CD4-positive, alpha-beta T cell (primary cell): ENCODE measurements at regions of chr13 and their contacts with region 1.

Region 1: DNA sequence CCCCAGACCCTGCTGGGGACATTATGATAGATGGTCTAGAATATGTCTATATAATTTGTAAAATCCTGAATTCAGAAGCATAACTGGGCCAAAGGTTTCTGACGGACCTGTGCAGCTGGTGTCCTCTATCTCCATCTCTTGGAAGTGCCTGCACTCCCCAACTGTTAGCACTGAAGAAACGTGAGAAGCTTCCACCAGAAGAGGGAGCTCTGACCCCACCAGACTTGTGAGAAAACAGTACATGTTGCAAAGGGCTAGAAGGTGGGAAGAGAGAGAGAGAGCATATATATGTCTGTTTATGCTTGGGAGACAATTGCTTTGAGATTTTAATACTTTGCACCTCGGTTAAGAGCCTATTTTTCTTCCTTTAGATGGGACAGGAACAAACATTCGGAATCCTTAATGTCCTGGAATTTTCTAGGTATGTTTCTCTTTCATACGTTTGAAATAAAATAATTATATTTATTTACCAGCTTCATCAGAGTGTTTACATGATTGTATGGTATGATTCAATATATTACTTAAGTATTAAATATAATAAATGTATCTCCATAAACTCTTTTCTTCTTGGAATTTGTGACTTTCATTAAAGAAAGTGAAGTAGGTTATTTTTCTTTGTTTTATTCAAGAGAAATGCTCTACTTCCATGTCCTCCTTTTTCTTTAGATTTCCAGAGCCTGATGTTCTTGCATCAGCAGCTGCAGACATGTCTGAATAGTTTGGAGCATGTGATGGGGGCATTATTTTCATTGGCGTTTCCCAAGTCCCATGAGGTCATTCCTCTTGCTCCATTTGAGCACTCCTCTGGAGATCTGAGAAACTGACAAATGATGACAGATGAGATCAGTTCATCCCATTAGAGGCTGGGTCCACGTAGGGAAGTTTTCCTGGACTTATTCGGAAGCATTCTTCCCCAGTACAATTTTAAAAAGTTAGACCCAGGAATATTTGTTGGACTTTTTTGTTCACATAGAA is 202.9 kb downstream of the ATP8A2 start:
- DNase-seq: peak; percentile 57 to 84 (median 67)
- ATAC-seq: peak; percentile 61
- H3K4me3 ChIP-seq: no peak overlapping the region
- H3K4me3 Mint-ChIP-seq: no peak overlapping the region
- H3K27ac ChIP-seq: no peak overlapping the region
- H3K27ac Mint-ChIP-seq: no peak overlapping the region
- H3K4me1 ChIP-seq: no peaks in the 10 kb centered on the region
- H3K4me1 Mint-ChIP-seq: no peaks in the 10 kb centered on the region
- H3K27me3 ChIP-seq: peaks cover 0 to 3% of the 10 kb centered on the region in 2 experiments
- H3K27me3 Mint-ChIP-seq: peaks cover 68% of the 10 kb centered on the region
- CTCF ChIP-seq: peak; percentile 87

Region 2: GRCh38 chr13:25943658-25944057 is 368.9 kb after region 1 on chr13:
- CTCF ChIA-PET with region 1: no interaction called
- POLR2A ChIA-PET with region 1: no interaction called
- intact Hi-C with region 1: loop called in 1 of 2 experiments (anchors 10 kb)
- DNase-seq: no peak
- ATAC-seq: no peak
- H3K4me3 ChIP-seq: no peak overlapping the region
- H3K4me3 Mint-ChIP-seq: no peak overlapping the region
- H3K27ac ChIP-seq: no peak overlapping the region
- H3K27ac Mint-ChIP-seq: no peak overlapping the region
- H3K4me1 ChIP-seq: no peaks in the 10 kb centered on the region
- H3K4me1 Mint-ChIP-seq: peaks cover 5% of the 10 kb centered on the region
- H3K27me3 ChIP-seq: no peaks in the 10 kb centered on the region
- H3K27me3 Mint-ChIP-seq: no peaks in the 10 kb centered on the region
- CTCF ChIP-seq: no peak

Region 3: GRCh38 chr13:26074706-26075105 is 500.0 kb after region 1 on chr13:
- CTCF ChIA-PET with region 1: interaction called, 5 read pairs
- POLR2A ChIA-PET with region 1: no interaction called
- intact Hi-C with region 1: loop called in 1 of 2 experiments (anchors 1 kb)
- DNase-seq: no peak
- ATAC-seq: no peak
- H3K4me3 ChIP-seq: no peak overlapping the region
- H3K4me3 Mint-ChIP-seq: no peak overlapping the region
- H3K27ac ChIP-seq: no peak overlapping the region
- H3K27ac Mint-ChIP-seq: no peak overlapping the region
- H3K4me1 ChIP-seq: no peaks in the 10 kb centered on the region
- H3K4me1 Mint-ChIP-seq: no peaks in the 10 kb centered on the region
- H3K27me3 ChIP-seq: peaks cover 5 to 9% of the 10 kb centered on the region in 2 experiments
- H3K27me3 Mint-ChIP-seq: peaks cover 67% of the 10 kb centered on the region
- CTCF ChIP-seq: no peak

Region 4: GRCh38 chr13:26698392-26699196 is 1123.9 kb after region 1 on chr13:
- CTCF ChIA-PET with region 1: interaction called, 4 read pairs
- POLR2A ChIA-PET with region 1: no interaction called
- intact Hi-C with region 1: loop called (anchors 2 to 5 kb)
- DNase-seq: peak; percentile 53 to 88 (median 76)
- ATAC-seq: peak; percentile 91
- H3K4me3 ChIP-seq: no peak overlapping the region
- H3K4me3 Mint-ChIP-seq: no peak overlapping the region
- H3K27ac ChIP-seq: no peak overlapping the region
- H3K27ac Mint-ChIP-seq: no peak overlapping the region
- H3K4me1 ChIP-seq: peaks cover 5% of the 10 kb centered on the region
- H3K4me1 Mint-ChIP-seq: no peaks in the 10 kb centered on the region
- H3K27me3 ChIP-seq: no peaks in the 10 kb centered on the region
- H3K27me3 Mint-ChIP-seq: peaks cover 13% of the 10 kb centered on the region
- CTCF ChIP-seq: peak; percentile 91